PC-3 (cell line): ENCODE measurements at regions of chr6 and their contacts with region 1.

Region 1: DNA sequence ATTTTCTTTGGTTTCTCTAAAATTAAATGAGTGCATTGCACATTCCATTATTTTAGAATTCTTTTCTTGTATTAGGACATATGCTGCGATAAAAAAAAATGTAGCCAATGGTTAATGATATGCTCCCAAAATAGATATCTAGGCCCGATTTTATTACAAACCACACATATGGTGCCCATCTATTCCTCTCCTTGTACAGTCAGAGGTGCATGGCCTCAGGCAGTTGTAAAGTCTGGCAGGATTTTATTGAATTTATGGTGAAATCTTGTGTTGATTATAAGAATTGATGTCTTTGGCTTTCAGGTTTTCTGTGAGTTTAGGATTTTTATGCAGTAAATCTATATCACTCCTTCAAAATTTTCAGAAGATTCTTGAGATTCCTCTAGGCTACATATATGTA is 192.2 kb downstream of the RFPL4B start:
- DNase-seq: no peak
- ATAC-seq: no peak
- H3K4me3 ChIP-seq: no peak overlapping the region
- H3K27ac ChIP-seq: no peak overlapping the region
- H3K4me1 ChIP-seq: no peaks in the 10 kb centered on the region
- H3K27me3 ChIP-seq: no peaks in the 10 kb centered on the region
- CTCF ChIP-seq: no peak

Region 2: GRCh38 chr6:112372226-112372806 is 167.0 kb before region 1 on chr6:
- CTCF ChIA-PET with region 1: no interaction called
- POLR2A ChIA-PET with region 1: no interaction called
- intact Hi-C with region 1: no loop called
- DNase-seq: peak; percentile 55
- ATAC-seq: peak; percentile 55
- H3K4me3 ChIP-seq: no peak overlapping the region
- H3K27ac ChIP-seq: no peak overlapping the region
- H3K4me1 ChIP-seq: no peaks in the 10 kb centered on the region
- H3K27me3 ChIP-seq: no peaks in the 10 kb centered on the region
- CTCF ChIP-seq: peak; percentile 69

Region 3: DNA sequence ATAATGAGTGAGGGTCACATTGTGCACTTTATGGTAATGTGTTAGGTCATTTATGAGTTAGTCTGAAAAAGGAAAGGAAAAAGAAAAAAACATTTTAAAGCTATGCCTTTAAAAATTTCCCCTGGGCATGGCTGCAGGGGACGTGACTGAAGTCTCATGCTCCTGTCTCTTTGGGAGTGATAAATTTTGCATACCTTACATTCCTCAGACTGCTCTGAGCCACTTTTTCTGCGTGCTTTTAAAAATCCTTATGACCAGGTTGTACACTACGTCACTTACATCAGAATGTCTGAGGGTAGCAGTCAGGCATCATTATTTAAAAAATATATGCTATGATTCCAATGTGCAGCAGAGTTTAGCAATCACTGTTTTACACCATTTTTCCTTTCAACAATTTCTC is 71.0 kb before region 1 on chr6:
- CTCF ChIA-PET with region 1: interaction called, 10 read pairs
- POLR2A ChIA-PET with region 1: no interaction called
- intact Hi-C with region 1: no loop called
- DNase-seq: peak; percentile 72
- ATAC-seq: peak; percentile 72
- H3K4me3 ChIP-seq: no peak overlapping the region
- H3K27ac ChIP-seq: no peak overlapping the region
- H3K4me1 ChIP-seq: peaks cover 15% of the 10 kb centered on the region
- H3K27me3 ChIP-seq: no peaks in the 10 kb centered on the region
- CTCF ChIP-seq: no peak